ENCODE measurements at regions of chr5 and their contacts with region 1.

Region 1: GRCh38 chr5:3602785-3603502 is 7.3 kb downstream of the IRX1 start:
- DNase-seq: peak; percentile 59
- H3K4me3 ChIP-seq: peak overlapping the region; percentile 82 to 100 (median 97)
- H3K27ac ChIP-seq: peak overlapping the region; percentile 96
- H3K4me1 ChIP-seq: peaks cover 62% of the 10 kb centered on the region
- H3K27me3 ChIP-seq: no peaks in the 10 kb centered on the region
- CTCF ChIP-seq: peak; percentile 45 to 76

Region 2: GRCh38 chr5:2038321-2039179 is 1564.4 kb before region 1 on chr5:
- CTCF ChIA-PET with region 1: no interaction called
- dilution Hi-C with region 1: no loop called
- in situ Hi-C with region 1: no loop called
- intact Hi-C with region 1: loop called (anchors 10 kb)
- DNase-seq: peak; percentile 42
- H3K4me3 ChIP-seq: peak overlapping the region; percentile 53 to 58 (median 57)
- H3K27ac ChIP-seq: no peak overlapping the region
- H3K4me1 ChIP-seq: peaks cover 12% of the 10 kb centered on the region
- H3K27me3 ChIP-seq: no peaks in the 10 kb centered on the region
- CTCF ChIP-seq: peak; percentile 59 to 72

Region 3: DNA sequence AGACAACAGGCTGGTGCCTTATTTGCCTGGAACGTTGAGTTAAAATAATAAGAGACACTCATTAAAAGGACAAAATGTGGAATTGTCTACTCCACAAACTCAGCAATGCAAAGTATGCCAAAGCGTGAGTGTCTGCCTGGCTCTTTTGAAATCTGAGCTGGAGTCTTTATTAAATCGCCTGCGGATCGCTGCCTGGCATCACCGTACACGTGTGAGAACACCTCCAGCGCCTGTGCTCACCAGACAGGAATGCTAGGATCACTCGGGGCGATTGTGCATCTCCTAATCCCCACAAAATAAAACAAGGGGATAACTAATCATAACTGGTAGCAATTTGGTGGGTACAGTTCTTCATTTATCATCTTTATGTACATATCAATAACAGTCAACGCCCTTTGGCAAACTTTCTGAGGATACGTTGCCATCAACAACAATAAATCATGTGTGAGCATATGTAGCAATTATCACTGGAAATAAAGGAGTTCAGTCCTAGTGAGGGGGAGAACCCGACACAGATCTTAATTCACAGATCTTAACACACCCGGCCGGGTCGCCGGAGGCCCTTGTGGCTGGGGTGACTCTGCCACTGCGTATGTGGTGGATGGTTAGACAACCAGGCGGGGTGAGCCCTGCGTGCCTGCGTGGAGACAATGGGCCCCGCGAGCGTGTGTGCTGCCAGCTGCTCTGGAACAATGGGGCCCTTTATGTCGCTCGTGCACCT is 292.2 kb before region 1 on chr5:
- CTCF ChIA-PET with region 1: no interaction called
- dilution Hi-C with region 1: no loop called
- in situ Hi-C with region 1: loop called in 1 of 2 experiments (anchors 5 kb)
- intact Hi-C with region 1: loop called (anchors 2 kb)
- DNase-seq: peak; percentile 99
- H3K4me3 ChIP-seq: no peak overlapping the region
- H3K27ac ChIP-seq: peak overlapping the region; percentile 98
- H3K4me1 ChIP-seq: peaks cover 25% of the 10 kb centered on the region
- H3K27me3 ChIP-seq: no peaks in the 10 kb centered on the region
- CTCF ChIP-seq: no peak

Region 4: DNA sequence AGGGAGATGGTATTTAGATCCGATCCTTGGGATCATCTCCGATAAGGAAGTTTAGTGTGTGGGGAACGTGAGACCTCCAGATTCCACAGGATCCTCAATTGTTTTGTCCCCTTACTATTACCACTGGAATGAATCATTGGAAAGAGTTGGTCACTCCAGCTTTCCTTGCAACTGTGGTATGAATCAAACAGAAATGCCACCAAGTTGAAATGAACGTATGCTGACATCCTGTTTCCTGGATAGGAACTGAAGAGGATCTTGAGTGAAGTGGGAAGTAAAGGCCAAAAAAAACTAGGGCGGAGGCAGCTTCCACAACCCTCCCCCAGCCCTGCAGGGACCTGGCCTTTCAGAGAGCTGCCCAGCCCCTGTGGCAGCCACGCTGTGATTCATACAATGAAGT is 16.6 kb after region 1 on chr5:
- CTCF ChIA-PET with region 1: no interaction called
- dilution Hi-C with region 1: no loop called
- in situ Hi-C with region 1: no loop called
- intact Hi-C with region 1: no loop called
- DNase-seq: no peak
- H3K4me3 ChIP-seq: no peak overlapping the region
- H3K27ac ChIP-seq: no peak overlapping the region
- H3K4me1 ChIP-seq: peaks cover 18% of the 10 kb centered on the region
- H3K27me3 ChIP-seq: no peaks in the 10 kb centered on the region
- CTCF ChIP-seq: no peak

Region 5: GRCh38 chr5:4156889-4157288 is 553.9 kb after region 1 on chr5:
- CTCF ChIA-PET with region 1: no interaction called
- dilution Hi-C with region 1: no loop called
- in situ Hi-C with region 1: no loop called
- intact Hi-C with region 1: loop called (anchors 5 kb)
- DNase-seq: peak; percentile 85
- H3K4me3 ChIP-seq: no peak overlapping the region
- H3K27ac ChIP-seq: no peak overlapping the region
- H3K4me1 ChIP-seq: peaks cover 18% of the 10 kb centered on the region
- H3K27me3 ChIP-seq: no peaks in the 10 kb centered on the region
- CTCF ChIP-seq: no peak

Region 6: DNA sequence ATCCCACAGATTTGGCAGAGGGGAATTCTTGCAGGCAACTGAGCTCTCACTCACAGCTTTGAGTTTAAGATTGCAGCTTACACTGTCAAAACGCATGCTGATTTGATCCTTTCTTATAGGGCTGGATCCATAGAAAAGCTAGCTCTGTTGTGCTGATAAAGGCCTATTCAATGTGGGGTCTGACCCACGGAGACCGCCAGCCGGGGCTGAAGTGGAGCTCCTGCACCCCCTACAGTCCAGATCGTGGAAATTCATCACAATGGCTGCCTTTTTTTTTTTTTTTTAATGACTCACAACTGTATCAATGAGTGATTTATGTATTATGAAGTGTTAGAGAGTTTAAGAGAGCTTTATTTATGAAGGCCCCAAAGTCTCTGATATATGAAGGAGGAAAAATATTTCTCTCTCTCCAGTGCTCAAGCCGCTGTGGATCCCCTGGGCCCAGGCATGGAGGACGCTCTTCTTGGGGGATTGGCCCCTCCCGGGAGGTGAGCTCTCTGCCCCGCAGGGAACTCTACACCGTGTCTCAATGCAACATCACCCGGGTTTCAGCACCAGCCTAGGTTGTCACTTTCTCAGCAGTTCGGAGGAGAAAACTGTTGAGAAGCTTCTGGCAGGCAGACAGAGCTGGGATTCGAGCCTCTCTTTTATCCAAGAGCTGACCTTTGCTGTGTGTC is 692.9 kb after region 1 on chr5:
- CTCF ChIA-PET with region 1: interaction called, 3 read pairs
- dilution Hi-C with region 1: no loop called
- in situ Hi-C with region 1: loop called (anchors 5 to 10 kb)
- intact Hi-C with region 1: loop called (anchors 1 kb)
- DNase-seq: peak; percentile 35
- H3K4me3 ChIP-seq: no peak overlapping the region
- H3K27ac ChIP-seq: no peak overlapping the region
- H3K4me1 ChIP-seq: peaks cover 2% of the 10 kb centered on the region
- H3K27me3 ChIP-seq: no peaks in the 10 kb centered on the region
- CTCF ChIP-seq: peak; percentile 66 to 81

Region 7: GRCh38 chr5:4563400-4563799 is 960.5 kb after region 1 on chr5:
- CTCF ChIA-PET with region 1: no interaction called
- dilution Hi-C with region 1: no loop called
- in situ Hi-C with region 1: no loop called
- intact Hi-C with region 1: loop called (anchors 5 kb)
- DNase-seq: peak; percentile 50
- H3K4me3 ChIP-seq: no peak overlapping the region
- H3K27ac ChIP-seq: no peak overlapping the region
- H3K4me1 ChIP-seq: no peaks in the 10 kb centered on the region
- H3K27me3 ChIP-seq: no peaks in the 10 kb centered on the region
- CTCF ChIP-seq: peak; percentile 88 to 89

Region 8: DNA sequence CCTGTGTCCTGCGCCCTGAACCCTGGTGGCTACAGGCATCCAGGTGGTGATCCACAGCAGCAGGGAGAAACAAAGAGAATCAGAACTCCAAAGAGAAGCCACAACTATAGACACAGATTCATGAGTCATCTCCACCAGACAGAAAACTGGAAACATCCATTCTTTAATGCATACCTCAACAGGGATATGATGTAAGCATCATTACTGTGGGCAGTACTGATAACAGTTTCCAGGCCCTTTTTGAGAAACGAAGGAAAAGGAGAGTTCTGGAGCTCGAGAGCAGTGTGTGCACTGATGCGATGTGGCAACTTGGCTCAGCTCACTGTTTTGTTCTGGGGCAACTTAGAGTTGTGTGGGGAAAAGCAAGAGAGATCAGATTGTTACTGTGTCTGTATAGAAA is 1321.6 kb after region 1 on chr5:
- CTCF ChIA-PET with region 1: no interaction called
- dilution Hi-C with region 1: no loop called
- in situ Hi-C with region 1: no loop called
- intact Hi-C with region 1: no loop called
- DNase-seq: no peak
- H3K4me3 ChIP-seq: no peak overlapping the region
- H3K27ac ChIP-seq: no peak overlapping the region
- H3K4me1 ChIP-seq: no peaks in the 10 kb centered on the region
- H3K27me3 ChIP-seq: no peaks in the 10 kb centered on the region
- CTCF ChIP-seq: no peak